Caco-2 (cell line): ENCODE measurements at regions of chr11 and their contacts with region 1.

Region 1: DNA sequence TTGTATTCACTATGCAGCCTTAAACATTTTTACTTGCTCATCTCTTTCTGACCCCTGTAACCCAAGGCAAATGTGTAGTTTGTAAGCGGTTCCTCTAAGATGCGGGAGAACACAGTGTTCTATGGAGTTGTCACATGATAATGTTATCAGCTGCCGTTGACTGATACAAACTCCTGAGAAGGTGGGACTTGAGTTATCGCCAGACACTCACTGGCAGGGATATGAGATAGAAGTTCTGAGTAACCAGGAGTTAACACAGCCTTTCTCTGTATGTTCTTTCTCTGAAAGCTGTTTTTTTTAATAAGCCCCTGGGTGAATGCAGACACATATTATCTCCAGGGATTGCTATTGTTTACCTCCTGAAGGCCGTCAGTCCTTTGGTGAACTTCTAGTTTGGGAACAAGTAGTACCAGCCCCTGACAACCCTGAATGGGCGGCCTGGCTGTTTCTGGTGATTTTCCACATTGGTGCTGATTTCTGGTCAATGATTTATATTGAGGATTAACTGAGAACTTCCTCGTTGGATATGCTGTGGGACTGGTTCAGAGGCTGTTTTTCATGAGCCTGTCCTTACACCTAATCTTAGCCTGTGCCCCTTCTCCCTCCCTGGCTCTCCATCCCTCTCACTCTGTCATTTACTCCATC is 155.3 kb upstream of the RASSF10 start:
- DNase-seq: peak; percentile 57 to 61
- H3K4me3 ChIP-seq: no peak overlapping the region
- H3K4me3 Mint-ChIP-seq: peak overlapping the region; percentile 35
- H3K27ac Mint-ChIP-seq: peak overlapping the region; percentile 91
- H3K4me1 ChIP-seq: peaks cover 42% of the 10 kb centered on the region
- H3K4me1 Mint-ChIP-seq: peaks cover 35% of the 10 kb centered on the region
- H3K27me3 ChIP-seq: no peaks in the 10 kb centered on the region
- H3K27me3 Mint-ChIP-seq: no peaks in the 10 kb centered on the region
- CTCF ChIP-seq: no peak

Region 2: DNA sequence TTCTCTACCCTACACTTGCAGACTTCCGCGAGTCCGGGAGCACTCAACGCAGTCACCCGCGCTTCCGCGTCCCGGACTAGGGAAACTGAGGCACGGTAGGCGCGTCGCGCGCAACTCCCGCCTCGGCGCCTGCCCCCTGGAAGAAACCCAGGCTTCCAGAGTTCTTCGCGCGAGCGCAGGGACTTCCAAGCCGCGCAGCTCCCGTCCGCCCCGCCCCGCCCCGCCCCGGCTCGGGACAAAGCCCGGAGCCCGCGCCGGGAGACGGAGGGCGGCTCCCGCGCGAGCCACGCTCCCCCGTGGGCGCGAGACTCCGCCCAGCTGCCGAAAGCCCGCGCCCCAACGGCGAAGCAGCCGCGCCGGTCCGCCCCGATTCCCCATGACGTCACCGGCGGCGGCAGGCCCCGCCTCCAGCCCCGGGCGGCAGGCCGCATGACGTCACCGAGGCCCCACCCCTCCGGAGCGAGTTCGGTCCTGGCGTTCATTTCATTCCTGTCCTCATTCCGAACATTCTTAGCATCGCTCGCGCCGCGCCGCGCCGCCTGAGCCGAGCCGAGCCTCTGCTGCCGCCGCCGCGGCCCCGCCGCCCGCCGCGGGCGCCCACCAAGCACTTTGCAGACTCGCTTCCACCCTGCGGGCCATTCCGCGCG is 179.7 kb before region 1 on chr11 and contains the start of gene TEAD1:
- CTCF ChIA-PET with region 1: no interaction called
- POLR2A ChIA-PET with region 1: no interaction called
- intact Hi-C with region 1: loop called (anchors 1 kb)
- DNase-seq: peak; percentile 97 to 100
- H3K4me3 ChIP-seq: peak within 1 kb of the TSS; percentile 81
- H3K4me3 Mint-ChIP-seq: peak within 1 kb of the TSS; percentile 79
- H3K27ac Mint-ChIP-seq: peak within 1 kb of the TSS; percentile 91
- H3K4me1 ChIP-seq: peaks cover 20% of the 10 kb centered on the region; the same call in 1 of the 2 replicates
- H3K4me1 Mint-ChIP-seq: peaks cover 32% of the 10 kb centered on the region
- H3K27me3 ChIP-seq: no peaks in the 10 kb centered on the region
- H3K27me3 Mint-ChIP-seq: no peaks in the 10 kb centered on the region
- CTCF ChIP-seq: no peak
- total RNA-seq, gene TEAD1: 134 and 144 TPM in 2 replicates

Region 3: GRCh38 chr11:12704049-12704448 is 149.7 kb before region 1 on chr11:
- CTCF ChIA-PET with region 1: no interaction called
- POLR2A ChIA-PET with region 1: no interaction called
- intact Hi-C with region 1: no loop called
- DNase-seq: no peak
- H3K4me3 ChIP-seq: no peak overlapping the region
- H3K4me3 Mint-ChIP-seq: no peak overlapping the region
- H3K27ac Mint-ChIP-seq: no peak overlapping the region
- H3K4me1 ChIP-seq: no peaks in the 10 kb centered on the region
- H3K4me1 Mint-ChIP-seq: peaks cover 31% of the 10 kb centered on the region
- H3K27me3 ChIP-seq: no peaks in the 10 kb centered on the region
- H3K27me3 Mint-ChIP-seq: no peaks in the 10 kb centered on the region
- CTCF ChIP-seq: no peak

Region 4: DNA sequence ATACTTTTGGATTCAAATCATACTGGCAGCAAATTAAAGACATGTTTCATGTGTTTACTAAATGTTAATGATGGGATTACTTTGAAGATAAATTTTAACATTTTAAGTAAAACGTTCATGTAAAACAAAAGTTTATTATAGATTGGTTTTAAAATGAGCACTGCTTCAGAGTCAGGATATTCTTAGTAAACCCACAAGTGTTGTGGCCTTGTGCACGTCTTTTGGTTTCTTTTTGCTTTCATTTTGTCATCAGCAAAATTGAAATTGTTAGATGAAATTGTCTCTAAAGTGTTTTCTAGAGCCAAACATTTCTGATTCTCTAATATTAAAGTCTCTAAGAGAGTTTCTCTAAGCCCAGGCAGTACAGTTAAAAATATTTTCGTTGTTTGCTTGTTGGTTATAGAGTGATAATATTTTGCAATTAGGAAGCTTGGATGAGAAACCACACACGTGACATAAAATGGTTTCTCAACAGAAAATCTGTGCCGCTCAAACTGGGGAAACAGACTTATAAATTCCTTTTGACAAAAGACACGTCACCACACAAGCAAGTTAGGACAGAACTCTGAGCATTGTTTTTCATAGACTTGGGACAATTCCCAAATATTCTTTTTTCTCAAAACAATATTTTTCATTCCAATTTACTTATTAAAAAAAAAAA is 15.2 kb before region 1 on chr11:
- CTCF ChIA-PET with region 1: no interaction called
- POLR2A ChIA-PET with region 1: no interaction called
- intact Hi-C with region 1: no loop called
- DNase-seq: no peak
- H3K4me3 ChIP-seq: no peak overlapping the region
- H3K4me3 Mint-ChIP-seq: no peak overlapping the region
- H3K27ac Mint-ChIP-seq: no peak overlapping the region
- H3K4me1 ChIP-seq: peaks cover 36% of the 10 kb centered on the region
- H3K4me1 Mint-ChIP-seq: peaks cover 28% of the 10 kb centered on the region
- H3K27me3 ChIP-seq: no peaks in the 10 kb centered on the region
- H3K27me3 Mint-ChIP-seq: no peaks in the 10 kb centered on the region
- CTCF ChIP-seq: no peak